AG04449 (cell line): ENCODE measurements at regions of chr19 and their contacts with region 1.

Region 1: DNA sequence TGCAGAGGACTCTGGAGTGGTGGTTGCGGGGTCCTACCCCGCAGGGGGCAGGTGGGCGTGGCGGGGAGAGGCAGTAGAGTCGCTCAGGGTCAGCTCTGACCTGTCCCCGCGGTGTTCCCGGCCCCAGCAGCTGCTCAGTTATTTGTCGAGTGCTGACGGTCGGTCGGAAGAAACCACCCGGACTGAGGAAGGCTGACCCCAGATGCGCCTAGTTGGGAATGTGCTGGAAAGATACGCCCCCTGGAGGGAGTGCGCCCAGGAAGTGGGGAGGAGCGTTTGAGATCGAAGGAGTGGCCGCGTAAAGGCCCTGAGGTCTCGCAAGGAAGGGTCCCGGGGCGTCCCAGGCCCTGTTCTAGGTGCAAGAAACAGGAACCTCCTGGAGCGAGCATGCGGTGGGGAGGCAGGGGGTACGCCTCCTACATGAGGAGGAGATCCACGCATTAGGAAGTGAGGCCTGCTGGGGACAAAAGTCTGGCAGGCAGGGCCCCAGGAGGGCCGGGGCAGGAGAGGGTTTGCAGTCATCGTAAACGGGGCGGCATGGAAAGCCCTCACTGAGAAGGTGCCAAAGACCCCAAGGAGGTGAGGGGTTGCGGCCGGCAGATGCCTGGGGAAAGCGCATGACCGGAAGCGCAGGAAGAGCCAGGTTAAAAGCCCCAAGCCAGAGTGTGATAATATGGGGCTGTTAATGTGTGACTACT is 9.2 kb downstream of the CCDC8 start:
- DNase-seq: no peak
- H3K4me3 ChIP-seq: peak overlapping the region; percentile 43
- CTCF ChIP-seq: peak; percentile 54

Region 2: GRCh38 chr19:46385636-46386035 is 18.6 kb before region 1 on chr19:
- CTCF ChIA-PET with region 1: interaction called, 22 read pairs
- POLR2A ChIA-PET with region 1: no interaction called
- DNase-seq: no peak
- H3K4me3 ChIP-seq: no peak overlapping the region
- CTCF ChIP-seq: no peak

Region 3: GRCh38 chr19:46478356-46478986 is 74.3 kb after region 1 on chr19:
- CTCF ChIA-PET with region 1: interaction called, 103 read pairs
- POLR2A ChIA-PET with region 1: interaction called, 4 read pairs
- DNase-seq: no peak
- H3K4me3 ChIP-seq: no peak overlapping the region
- CTCF ChIP-seq: no peak

Region 4: DNA sequence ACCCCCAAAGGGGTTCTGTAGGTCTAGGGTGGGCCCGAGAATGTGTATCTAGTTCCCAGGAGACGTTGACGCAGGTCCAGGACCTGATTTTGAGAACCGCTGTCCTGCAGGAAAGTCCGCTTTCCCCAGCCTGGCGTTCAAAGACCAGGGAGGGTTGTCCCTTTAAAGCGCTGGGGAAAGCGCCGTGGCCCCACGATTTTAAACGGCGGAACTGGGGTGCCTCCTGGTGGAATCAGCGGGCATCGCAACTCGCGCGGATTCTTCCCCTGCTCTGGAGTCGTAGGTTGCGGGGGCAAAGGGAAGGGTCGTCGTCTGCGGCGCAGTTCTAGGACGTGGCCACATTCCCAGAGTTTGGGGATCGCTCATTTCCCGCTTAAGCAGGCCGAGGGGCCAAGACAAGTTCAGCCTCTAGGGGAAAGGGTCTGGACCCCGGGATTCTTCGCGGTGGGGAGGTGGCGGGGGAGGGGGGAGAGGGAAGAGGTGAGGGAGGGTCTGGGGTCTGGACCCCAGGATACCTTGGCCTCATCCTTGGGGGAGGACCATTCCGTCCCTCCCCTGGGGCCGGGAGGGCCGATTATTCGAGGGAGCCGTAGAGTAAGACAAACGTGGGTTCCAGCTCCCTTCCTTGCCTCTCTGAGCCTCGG is 83.7 kb after region 1 on chr19:
- CTCF ChIA-PET with region 1: interaction called, 257 read pairs
- POLR2A ChIA-PET with region 1: interaction called, 6 read pairs
- DNase-seq: no peak
- H3K4me3 ChIP-seq: peak overlapping the region; percentile 47
- CTCF ChIP-seq: peak; percentile 95

Region 5: DNA sequence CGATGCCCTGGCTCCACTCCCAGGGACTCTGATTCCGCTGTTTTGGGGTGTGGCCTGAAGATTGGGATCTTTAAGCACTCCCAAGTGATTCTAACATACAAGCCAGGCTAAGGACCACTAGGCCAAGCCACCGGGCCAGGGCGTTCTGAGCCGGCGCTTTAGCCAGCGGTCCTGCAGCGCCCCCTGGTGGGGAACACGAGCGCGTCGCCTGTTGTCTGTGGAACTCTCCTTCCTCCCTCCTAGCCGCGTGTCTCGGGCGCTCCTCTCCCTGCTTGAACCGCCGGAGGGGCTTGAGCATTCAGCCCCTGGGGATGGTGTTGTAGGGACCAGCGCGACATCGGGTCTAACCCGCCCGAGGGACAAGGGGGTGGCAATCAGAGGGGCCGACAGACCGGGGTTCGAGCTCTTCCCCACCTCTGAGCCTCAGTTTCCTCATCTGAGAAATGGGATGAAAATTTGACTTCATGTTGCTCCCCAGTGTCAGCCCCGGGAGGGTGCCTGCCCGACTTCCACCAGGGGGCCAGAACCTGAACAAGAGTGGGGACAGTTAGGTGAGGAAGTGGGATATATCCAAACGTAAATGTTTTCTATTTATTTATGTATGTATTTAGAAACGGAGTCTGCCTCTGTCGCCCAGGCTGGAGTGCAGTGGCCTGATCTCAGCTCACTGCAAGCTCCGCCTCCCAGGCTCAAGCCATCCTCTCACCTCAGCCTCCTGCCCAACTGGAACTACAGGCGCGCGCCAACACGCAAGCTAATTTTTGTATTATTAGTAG is 109.4 kb after region 1 on chr19:
- CTCF ChIA-PET with region 1: interaction called, 32 read pairs
- POLR2A ChIA-PET with region 1: no interaction called
- DNase-seq: no peak
- H3K4me3 ChIP-seq: no peak overlapping the region
- CTCF ChIP-seq: peak; percentile 76

Region 6: GRCh38 chr19:46537136-46538097 is 133.2 kb after region 1 on chr19:
- CTCF ChIA-PET with region 1: interaction called, 12 read pairs
- POLR2A ChIA-PET with region 1: no interaction called
- DNase-seq: no peak
- H3K4me3 ChIP-seq: no peak overlapping the region
- CTCF ChIP-seq: peak; percentile 86